ENCODE measurements at regions of chr16 and their contacts with region 1.

Region 1: DNA sequence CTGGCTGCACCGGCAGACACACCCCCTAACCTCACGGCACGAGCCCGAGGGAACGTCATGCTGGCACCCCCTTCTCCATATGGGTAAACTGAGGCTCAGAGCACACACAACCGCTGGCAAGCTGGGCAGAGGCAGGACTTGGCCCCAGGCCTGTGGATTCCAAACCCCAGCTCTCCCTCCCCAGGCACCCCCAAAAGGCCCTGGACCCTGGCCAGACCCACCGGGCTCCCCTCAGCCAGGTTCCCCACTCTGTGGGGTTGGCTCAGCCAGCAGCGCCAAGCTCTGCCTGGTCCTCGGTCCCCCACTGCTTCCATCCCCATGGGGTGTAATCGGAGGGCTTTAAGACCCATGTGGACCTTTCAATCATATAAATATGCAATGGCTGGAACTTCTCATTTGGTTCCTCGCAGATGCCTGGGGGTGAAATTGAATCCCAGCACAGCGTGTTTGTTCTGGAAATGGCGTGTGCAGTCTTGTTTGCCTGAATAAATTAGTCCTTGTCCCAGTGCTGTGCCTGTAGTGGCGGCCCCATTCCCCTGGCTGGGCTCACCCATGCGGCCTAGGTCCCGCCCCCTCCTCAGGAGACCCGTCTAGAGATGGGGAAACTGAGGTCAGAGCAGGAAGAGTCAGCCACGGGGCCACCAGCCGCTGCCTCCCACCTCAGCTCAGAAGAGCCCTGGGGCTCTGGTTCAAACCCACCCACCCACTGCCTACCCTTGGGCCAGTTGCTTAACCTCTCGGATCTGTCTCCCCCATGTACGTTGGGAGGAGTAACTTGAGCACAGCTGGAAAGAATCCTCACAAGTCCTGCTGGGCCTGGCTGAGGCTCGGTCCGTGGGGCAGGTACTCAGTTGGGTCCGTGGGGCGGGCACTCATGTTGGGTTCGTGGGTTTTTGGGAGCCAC is 57.3 kb downstream of the ZFPM1 start:
- DNase-seq: no peak

Region 2: GRCh38 chr16:88461331-88462269 is 48.7 kb before region 1 on chr16:
- intact Hi-C with region 1: loop called (anchors 5 kb)
- DNase-seq: no peak

Region 3: GRCh38 chr16:88925101-88925887 is 415.0 kb after region 1 on chr16:
- intact Hi-C with region 1: no loop called
- DNase-seq: peak in 4 of 10 donors; percentile 21 to 84 (median 56)

Region 4: DNA sequence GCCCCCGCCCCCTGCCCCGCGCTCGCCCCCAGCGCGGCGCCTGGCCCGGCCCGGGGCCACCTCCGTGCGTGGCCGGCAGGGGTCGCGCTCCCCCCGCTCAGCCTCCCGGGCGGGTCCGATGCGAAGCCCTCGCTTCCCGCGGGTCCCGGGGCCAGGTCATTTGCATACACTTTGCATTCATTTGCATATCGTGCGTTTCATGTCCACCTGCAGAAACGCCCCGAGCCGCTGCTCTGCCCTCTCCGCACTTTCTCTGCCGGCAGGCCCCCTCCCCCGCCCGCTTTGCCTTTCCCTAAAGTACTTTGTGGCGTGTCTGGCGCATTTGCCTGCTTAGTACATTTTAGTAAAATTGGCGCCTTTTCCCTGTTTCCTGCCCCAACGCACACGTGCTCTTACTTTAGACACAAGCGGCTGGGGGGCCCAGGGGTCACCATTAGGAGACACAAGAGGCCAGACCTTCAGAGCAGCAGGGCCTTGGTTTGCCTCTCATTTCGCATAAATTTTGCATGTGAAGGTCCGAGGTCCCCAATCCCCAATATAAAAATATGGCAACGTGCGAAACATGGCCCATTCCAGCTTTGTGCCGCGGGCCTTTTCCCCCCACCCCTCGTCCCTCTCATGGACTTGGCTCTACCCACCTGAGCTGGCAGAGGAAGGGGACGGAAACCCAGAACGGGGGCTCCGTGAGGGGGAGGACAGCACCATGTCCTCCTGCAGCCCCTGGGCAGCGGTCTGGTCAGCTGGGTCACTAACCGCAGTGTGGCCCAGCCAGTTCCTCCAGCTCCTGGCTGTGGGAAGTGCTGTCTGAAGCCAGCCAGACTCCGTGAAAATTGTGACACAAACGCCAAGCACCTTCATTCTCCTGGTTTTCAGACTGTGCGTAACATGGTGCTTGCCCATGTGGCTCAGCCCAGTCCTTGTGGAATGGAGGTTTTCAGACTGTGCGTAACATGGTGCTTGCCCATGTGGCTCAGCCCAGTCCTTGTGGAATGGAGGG is 431.9 kb after region 1 on chr16:
- intact Hi-C with region 1: no loop called
- DNase-seq: peak in 3 of 10 donors; percentile 45 to 50 (median 48)

Measured in posterior cingulate gyrus (tissue), 11 donors.